HEK293 (cell line): ENCODE measurements at regions of chr7 and their contacts with region 1.

Region 1: GRCh38 chr7:2670720-2671391 is 17.1 kb upstream of the AMZ1 start:
- H3K4me3 ChIP-seq: no peak overlapping the region
- H3K27ac ChIP-seq: no peak overlapping the region
- H3K4me1 ChIP-seq: no peaks in the 10 kb centered on the region
- CTCF ChIP-seq: peak; percentile 64

Region 2: DNA sequence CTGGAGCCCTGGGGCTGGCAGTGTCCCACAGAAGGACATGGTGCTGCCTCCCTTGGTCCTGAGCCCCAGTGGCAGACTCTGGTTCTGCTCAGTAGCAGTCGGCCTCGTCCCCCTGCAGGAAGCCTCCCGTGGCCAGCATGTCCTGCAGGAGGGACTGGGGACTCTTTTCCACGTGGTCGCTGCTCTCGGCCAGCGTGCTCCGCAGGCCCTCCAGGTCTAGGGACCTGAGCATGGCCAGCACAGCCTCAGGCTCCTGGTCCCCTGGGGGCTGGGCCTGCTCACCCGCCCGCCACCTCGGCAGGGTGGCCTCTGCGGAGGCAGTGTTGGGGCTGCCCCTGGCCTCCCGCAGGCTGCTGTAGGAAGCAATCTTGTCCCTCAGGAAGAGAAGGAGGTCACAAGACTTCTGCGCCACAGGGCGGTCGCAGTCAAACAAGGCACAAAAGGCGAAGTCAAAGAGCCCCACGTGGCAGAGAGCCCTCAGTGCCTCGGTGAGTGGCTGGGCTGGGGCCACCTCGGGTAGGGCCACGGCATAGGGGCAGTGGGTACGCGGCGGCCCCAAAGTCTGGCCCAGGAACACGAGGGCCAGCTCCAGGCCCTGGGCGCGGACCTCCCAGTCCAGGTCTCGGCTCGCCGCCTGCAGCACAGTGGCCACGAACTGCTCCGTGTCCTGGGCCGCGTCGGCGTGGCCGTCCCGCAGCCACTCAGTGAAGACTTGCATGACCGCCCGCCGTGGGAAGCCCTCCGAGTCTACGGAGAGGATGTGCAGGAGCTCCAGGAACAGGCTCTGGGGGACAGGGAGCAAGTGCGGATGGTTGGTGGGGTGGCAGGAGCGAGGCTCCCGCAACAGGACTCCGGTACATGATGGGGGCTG is 132.6 kb before region 1 on chr7:
- CTCF ChIA-PET with region 1: no interaction called
- POLR2A ChIA-PET with region 1: no interaction called
- H3K4me3 ChIP-seq: no peak overlapping the region
- H3K27ac ChIP-seq: no peak overlapping the region
- H3K4me1 ChIP-seq: no peaks in the 10 kb centered on the region
- CTCF ChIP-seq: peak; percentile 16; the same call in 1 of the 2 replicates

Region 3: GRCh38 chr7:2680792-2681490 is 10.1 kb after region 1 on chr7:
- CTCF ChIA-PET with region 1: interaction called, 27 read pairs
- POLR2A ChIA-PET with region 1: no interaction called
- H3K4me3 ChIP-seq: no peak overlapping the region
- H3K27ac ChIP-seq: no peak overlapping the region
- H3K4me1 ChIP-seq: no peaks in the 10 kb centered on the region
- CTCF ChIP-seq: peak; percentile 50